ENCODE measurements at regions of chr5 and their contacts with region 1.

Region 1: GRCh38 chr5:179023528-179024430 is at the start of gene ZNF879:
- DNase-seq: peak; percentile 95
- total RNA-seq, gene ZNF879: 3.9 TPM

Region 2: GRCh38 chr5:178626484-178627258 is 397.1 kb before region 1 on chr5 and contains the start of gene CLK4:
- intact Hi-C with region 1: loop called (anchors 5 kb)
- DNase-seq: peak; percentile 99
- total RNA-seq, gene CLK4: 22.1 TPM

Region 3: DNA sequence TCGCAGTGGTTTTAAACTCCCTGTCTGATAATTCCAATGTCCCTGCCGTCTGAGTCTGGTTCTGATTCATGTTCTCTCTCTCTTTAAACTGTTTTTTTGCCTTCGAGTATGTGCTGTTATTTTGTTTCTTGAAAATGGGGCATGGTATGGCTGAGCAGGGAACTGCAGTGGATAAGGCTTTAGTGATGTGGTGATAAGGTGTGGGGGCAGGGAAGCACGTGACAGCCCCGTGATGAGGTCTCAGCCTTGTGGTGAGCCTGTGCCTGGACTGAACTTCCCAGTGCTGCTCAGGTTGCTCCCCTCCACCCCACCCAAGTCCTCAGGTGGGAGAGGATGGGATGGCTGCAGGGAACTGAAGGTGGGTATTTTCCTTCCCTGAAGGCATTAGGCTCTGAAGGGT is 169.5 kb before region 1 on chr5:
- intact Hi-C with region 1: no loop called
- DNase-seq: no peak

Region 4: GRCh38 chr5:178895651-178896571 is 127.9 kb before region 1 on chr5 and contains the start of gene ZFP2:
- intact Hi-C with region 1: loop called (anchors 5 kb)
- DNase-seq: no peak
- total RNA-seq, gene ZFP2: 1.2 TPM

Region 5: GRCh38 chr5:178940569-178941360 is 83.0 kb before region 1 on chr5 and contains the start of gene ZNF454:
- intact Hi-C with region 1: loop called (anchors 1 kb)
- DNase-seq: peak; percentile 96
- total RNA-seq, gene ZNF454: 1.7 TPM

Region 6: GRCh38 chr5:179060116-179061008 is 36.6 kb after region 1 on chr5 and contains the start of gene ZNF354C:
- intact Hi-C with region 1: loop called (anchors 1 kb)
- DNase-seq: peak; percentile 95
- total RNA-seq, gene ZNF354C: 4.0 TPM

Region 7: DNA sequence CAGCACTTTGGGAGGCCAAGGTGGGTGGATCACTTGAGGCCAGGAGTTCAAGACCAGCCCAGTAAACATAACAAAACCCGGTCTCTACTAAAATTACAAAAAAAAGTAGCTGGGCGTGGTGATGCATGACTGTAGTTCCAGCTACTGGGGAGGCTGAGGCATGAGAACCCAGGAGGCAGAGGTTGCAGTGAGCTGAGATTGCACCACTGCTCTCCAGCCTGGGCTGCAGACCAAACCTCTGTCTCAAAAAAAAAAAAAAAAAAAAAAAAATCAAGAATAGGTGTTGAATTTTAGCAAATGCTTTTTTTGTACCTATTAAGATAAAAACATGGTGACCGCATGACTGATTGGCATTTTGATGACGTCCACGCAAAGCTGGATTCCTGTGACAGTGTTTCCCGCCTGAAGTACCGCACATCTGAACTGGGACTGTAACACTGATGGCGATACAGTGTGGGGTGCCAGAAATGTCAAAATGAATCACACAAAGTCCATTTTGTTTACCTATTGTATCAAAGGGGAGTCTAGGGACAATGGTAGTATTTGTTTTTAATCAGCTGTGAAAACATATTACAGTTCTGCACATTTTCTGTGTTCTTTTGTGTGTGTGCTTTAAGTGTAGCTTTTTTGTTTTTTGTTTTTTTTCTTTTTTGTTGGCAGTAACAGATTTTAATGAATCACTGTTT is 907.2 kb after region 1 on chr5:
- intact Hi-C with region 1: no loop called
- DNase-seq: no peak

Measured in cardiac septum (tissue), 1 donor.